ENCODE measurements at regions of chr18 and their contacts with region 1.

Region 1: DNA sequence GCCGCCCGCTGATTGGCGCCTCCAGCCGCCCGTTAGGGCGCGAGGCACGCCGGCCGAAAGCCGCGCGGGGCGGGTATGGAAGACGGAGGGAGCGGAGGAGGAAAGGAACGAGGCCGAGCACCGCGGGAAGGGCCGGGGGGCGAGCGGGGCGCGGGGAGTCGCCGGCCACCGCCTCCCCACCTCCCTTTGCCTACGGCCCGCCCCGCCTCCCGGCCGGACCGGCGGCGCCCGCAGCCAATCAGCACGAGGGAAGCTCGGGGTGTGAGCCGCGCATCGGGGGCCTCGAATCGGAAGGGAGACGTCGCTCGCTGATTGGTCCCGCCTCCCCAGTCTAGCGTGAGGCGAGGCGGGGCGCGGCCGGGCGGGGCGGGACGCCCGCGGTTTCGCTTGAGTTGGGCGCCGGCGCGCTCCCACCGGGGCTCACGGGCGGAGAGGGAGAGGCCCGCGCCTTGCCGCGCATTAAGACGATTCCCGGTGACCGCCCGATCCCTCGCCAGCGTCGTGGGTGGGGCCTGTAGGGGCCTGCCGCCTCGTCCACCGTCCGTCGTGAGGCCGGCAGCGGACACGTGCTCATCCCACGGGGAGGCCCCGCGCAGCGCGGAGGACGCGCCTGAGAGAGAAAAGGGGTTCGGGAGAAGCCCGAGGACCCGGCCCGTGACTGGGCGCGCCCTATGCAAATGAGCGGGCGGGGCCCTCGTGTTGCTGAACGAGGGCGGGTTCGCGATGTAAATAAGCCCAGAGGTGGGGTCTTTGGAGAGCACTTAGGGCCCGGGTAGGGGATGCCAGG is 665 bp upstream of the SMAD2 start:
- DNase-seq: peak; percentile 97
- ATAC-seq: peak; percentile 92 to 97 (median 94)
- H3K4me3 ChIP-seq: peak overlapping the region; percentile 36 to 93 (median 87)
- H3K27ac ChIP-seq: peak overlapping the region; percentile 89 to 99 (median 98)
- H3K4me1 ChIP-seq: peaks cover 0 to 48% (median 40%) of the 10 kb centered on the region in 9 donors
- H3K27me3 ChIP-seq: no peaks in the 10 kb centered on the region
- CTCF ChIP-seq: no peak

Region 2: GRCh38 chr18:47842836-47843235 is 88.3 kb before region 1 on chr18:
- intact Hi-C with region 1: no loop called
- DNase-seq: no peak
- ATAC-seq: no peak
- H3K4me3 ChIP-seq: no peak overlapping the region
- H3K27ac ChIP-seq: no peak overlapping the region
- H3K4me1 ChIP-seq: peaks cover 0 to 10% (median 0%) of the 10 kb centered on the region in 9 donors
- H3K27me3 ChIP-seq: no peaks in the 10 kb centered on the region
- CTCF ChIP-seq: no peak

Region 3: DNA sequence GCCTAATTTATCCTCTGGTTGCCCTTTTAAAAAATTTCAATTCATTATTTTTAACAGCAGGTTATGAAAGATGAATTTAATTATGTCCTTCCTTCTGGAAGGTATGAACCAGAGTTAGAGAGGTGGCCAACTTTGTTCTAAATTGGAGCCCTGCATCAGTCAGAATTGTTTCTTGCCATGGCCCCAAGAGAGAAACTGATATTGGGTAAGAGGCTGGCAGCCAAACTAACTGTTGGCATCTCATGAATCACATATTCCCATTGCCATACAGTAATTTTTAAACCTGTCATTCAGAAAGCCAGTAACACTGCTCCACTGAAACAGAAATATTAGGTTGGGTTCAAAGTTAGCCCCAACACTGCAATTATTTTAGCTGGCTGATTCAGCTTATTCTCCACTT is 68.1 kb before region 1 on chr18:
- intact Hi-C with region 1: loop called in 2 of 10 experiments (anchors 5 kb)
- DNase-seq: peak in 1 of 2 donors; percentile 36
- ATAC-seq: peak in 7 of 8 donors; percentile 69 to 97 (median 91)
- H3K4me3 ChIP-seq: no peak overlapping the region
- H3K27ac ChIP-seq: peak overlapping the region in 7 of 10 donors; percentile 4 to 61 (median 33)
- H3K4me1 ChIP-seq: peaks cover 0 to 7% (median 0%) of the 10 kb centered on the region in 9 donors
- H3K27me3 ChIP-seq: no peaks in the 10 kb centered on the region
- CTCF ChIP-seq: no peak

Region 4: GRCh38 chr18:47883771-47884413 is 47.2 kb before region 1 on chr18:
- intact Hi-C with region 1: no loop called
- DNase-seq: peak in 1 of 2 donors; percentile 36
- ATAC-seq: peak in 5 of 8 donors; percentile 47 to 70 (median 49)
- H3K4me3 ChIP-seq: no peak overlapping the region
- H3K27ac ChIP-seq: no peak overlapping the region
- H3K4me1 ChIP-seq: peaks cover 0 to 10% (median 0%) of the 10 kb centered on the region in 9 donors
- H3K27me3 ChIP-seq: no peaks in the 10 kb centered on the region
- CTCF ChIP-seq: no peak

Region 5: GRCh38 chr18:48002933-48003365 is 71.8 kb after region 1 on chr18:
- intact Hi-C with region 1: loop called in 7 of 10 experiments (anchors 2 to 10 kb)
- DNase-seq: peak; percentile 50 to 67
- ATAC-seq: peak; percentile 64 to 93 (median 90)
- H3K4me3 ChIP-seq: no peak overlapping the region
- H3K27ac ChIP-seq: peak overlapping the region in 9 of 10 donors; percentile 52 to 88 (median 73)
- H3K4me1 ChIP-seq: peaks cover 0 to 27% (median 18%) of the 10 kb centered on the region in 9 donors
- H3K27me3 ChIP-seq: peaks cover 0 to 7% (median 0%) of the 10 kb centered on the region in 7 donors
- CTCF ChIP-seq: no peak

Region 6: DNA sequence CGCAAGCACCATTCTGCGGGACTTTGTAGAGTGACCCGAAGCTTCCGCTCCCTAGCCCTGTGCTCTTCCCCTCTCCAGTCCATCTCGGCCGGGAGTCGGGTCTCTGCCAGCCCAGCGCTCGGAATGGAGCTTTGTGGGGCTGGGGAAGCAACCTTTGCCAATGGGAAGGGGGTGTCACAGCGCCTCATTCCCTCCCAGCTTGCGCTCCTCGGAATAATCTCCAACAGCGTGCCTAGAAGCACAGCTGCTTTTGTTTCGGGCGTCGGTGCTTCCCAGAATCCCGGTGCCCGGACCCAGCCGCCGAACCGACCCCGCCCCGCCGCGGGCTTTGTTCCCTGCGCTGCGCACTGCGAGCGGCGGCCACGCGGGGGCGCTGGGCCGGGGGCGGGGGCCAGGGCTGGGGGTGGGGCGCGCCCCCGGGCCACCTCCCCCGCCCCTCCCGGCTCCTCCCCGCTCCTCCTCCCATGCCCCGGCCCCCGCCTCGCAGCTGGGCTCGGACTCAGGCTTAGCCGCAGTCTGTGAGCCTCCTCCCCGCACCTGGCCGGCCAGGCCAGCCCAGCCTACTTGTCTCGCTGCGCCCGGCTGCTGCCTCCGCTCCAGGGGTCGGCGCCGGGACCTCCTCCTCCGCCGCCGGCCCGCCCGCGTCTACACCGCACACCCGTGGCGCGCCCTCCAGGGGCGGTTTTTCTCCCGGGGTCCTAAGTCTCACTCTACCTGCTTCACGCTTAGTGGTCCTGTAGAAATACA is 77.0 kb after region 1 on chr18:
- intact Hi-C with region 1: loop called in 7 of 10 experiments (anchors 2 to 10 kb)
- DNase-seq: peak; percentile 68 to 69
- ATAC-seq: peak; percentile 60 to 90 (median 85)
- H3K4me3 ChIP-seq: peak overlapping the region; percentile 22 to 68 (median 60)
- H3K27ac ChIP-seq: peak overlapping the region in 5 of 10 donors; percentile 30 to 68 (median 48)
- H3K4me1 ChIP-seq: peaks cover 0 to 27% (median 20%) of the 10 kb centered on the region in 9 donors
- H3K27me3 ChIP-seq: peaks cover 0 to 8% (median 0%) of the 10 kb centered on the region in 7 donors
- CTCF ChIP-seq: peak; percentile 59 to 94 (median 73)

Region 7: GRCh38 chr18:48022531-48023329 is 91.6 kb after region 1 on chr18:
- intact Hi-C with region 1: loop called in 1 of 10 experiments (anchors 5 kb)
- DNase-seq: peak in 1 of 2 donors; percentile 41
- ATAC-seq: peak; percentile 47 to 78 (median 72)
- H3K4me3 ChIP-seq: no peak overlapping the region
- H3K27ac ChIP-seq: no peak overlapping the region
- H3K4me1 ChIP-seq: peaks cover 5 to 26% (median 15%) of the 10 kb centered on the region in 9 donors
- H3K27me3 ChIP-seq: peaks cover 0 to 23% (median 6%) of the 10 kb centered on the region in 7 donors
- CTCF ChIP-seq: peak; percentile 28 to 70 (median 63)

Region 8: GRCh38 chr18:48161191-48161910 is 230.2 kb after region 1 on chr18:
- intact Hi-C with region 1: loop called in 1 of 10 experiments (anchors 10 kb)
- DNase-seq: peak; percentile 86 to 88
- ATAC-seq: peak; percentile 94 to 97 (median 96)
- H3K4me3 ChIP-seq: peak overlapping the region; percentile 63 to 87 (median 67)
- H3K27ac ChIP-seq: peak overlapping the region; percentile 31 to 95 (median 90)
- H3K4me1 ChIP-seq: peaks cover 6 to 47% (median 27%) of the 10 kb centered on the region in 9 donors
- H3K27me3 ChIP-seq: no peaks in the 10 kb centered on the region
- CTCF ChIP-seq: no peak

Region 9: DNA sequence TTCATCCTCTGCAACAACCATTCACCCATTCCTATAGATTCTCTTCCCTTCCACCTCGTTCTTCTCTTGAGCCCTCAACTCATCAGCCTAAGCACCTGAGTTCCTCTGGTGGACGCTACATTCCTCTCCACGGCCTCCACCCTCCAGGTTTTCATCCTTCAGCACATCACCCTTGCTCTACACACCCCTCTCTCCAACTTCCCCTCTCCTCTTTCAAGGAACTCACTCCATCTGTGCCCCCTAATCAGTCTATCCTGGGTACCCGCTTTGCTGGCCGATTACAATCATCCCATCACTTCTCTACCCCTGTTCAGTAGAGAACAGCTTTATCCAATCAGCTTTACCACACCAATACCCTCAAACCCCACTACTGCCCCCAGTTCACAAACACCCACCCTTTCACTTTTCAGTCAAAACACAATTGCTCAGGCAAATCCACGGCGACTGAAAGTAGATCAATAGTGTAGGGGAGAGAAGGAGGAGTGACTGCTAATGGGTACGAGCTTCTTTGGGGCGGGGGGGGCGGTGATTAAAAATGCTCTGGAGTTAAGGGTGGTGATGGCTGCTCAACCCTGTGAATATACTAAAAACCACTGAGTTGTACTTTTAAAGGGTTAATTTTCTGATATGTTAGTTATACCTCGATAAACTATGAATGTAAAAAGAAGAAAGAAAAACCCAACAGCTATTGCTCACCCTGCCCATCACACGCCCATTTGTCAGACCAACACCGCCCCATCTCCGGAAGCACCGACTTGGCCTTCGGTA is 1528.5 kb after region 1 on chr18:
- intact Hi-C with region 1: loop called in 1 of 10 experiments (anchors 10 kb)
- DNase-seq: peak in 1 of 2 donors; percentile 35
- ATAC-seq: peak in 3 of 8 donors; percentile 12 to 50 (median 39)
- H3K4me3 ChIP-seq: peak overlapping the region; percentile 69 to 100 (median 96)
- H3K27ac ChIP-seq: peak overlapping the region; percentile 70 to 95 (median 90)
- H3K4me1 ChIP-seq: peaks cover 3 to 35% (median 24%) of the 10 kb centered on the region in 9 donors
- H3K27me3 ChIP-seq: no peaks in the 10 kb centered on the region
- CTCF ChIP-seq: no peak

Measured in heart right ventricle (tissue), 16 donors.